CD4-positive, alpha-beta T cell (primary cell): ENCODE measurements at regions of chr17 and their contacts with region 1.

Region 1: DNA sequence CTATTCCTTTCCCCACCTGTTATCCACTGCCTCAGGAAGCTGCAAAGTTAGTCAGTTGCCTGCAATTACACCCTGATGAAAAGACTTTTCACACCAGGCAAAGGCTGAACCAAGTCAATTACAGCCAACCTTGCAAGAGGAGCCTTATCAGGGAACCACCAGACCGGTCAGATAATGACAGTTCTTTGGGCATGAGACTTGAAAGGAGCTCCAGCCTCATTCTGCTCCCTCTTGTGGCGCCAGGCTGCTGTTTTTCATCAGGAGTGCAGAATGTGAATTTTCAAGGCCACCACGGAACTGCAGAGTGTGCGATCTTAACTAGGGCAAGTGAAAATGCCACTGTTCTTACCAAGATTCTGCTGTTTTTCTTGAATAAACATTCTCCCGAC is 22.5 kb downstream of the DNAI2 start:
- DNase-seq: peak in 9 of 14 experiments; percentile 15 to 70 (median 32)
- ATAC-seq: no peak
- H3K4me3 ChIP-seq: no peak overlapping the region
- H3K4me3 Mint-ChIP-seq: no peak overlapping the region
- H3K27ac ChIP-seq: no peak overlapping the region
- H3K27ac Mint-ChIP-seq: no peak overlapping the region
- H3K4me1 ChIP-seq: peaks cover 19% of the 10 kb centered on the region
- H3K4me1 Mint-ChIP-seq: peaks cover 10% of the 10 kb centered on the region
- H3K27me3 ChIP-seq: no peaks in the 10 kb centered on the region
- H3K27me3 Mint-ChIP-seq: no peaks in the 10 kb centered on the region
- CTCF ChIP-seq: peak; percentile 50

Region 2: DNA sequence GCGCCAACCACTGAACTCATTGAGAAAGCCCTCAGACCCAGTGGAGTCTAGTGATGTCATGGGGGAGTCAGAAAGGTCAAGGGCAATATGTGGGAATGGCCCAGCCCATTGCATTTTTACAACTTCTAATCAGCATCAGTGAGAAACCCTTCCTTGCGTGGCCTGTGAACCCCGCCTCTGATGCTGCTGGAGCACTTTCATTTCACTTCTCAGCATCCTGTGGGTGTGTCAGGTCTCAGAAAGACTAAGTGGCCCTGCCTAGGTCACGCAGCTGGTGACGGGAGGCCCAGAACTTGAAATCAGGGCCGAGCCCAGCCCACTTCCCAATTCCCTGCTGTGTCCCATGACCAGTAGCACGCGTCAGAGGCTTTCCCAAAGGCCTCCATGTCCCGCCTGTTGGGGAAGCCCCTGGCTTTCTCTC is 16.4 kb before region 1 on chr17:
- CTCF ChIA-PET with region 1: interaction called, 8 read pairs
- POLR2A ChIA-PET with region 1: interaction called, 18 read pairs
- intact Hi-C with region 1: no loop called
- DNase-seq: peak; percentile 35 to 94 (median 54)
- ATAC-seq: peak; percentile 76
- H3K4me3 ChIP-seq: no peak overlapping the region
- H3K4me3 Mint-ChIP-seq: peak overlapping the region; percentile 12
- H3K27ac ChIP-seq: peak overlapping the region; percentile 57 to 90
- H3K27ac Mint-ChIP-seq: peak overlapping the region; percentile 90
- H3K4me1 ChIP-seq: peaks cover 73% of the 10 kb centered on the region
- H3K4me1 Mint-ChIP-seq: peaks cover 57% of the 10 kb centered on the region
- H3K27me3 ChIP-seq: no peaks in the 10 kb centered on the region
- H3K27me3 Mint-ChIP-seq: no peaks in the 10 kb centered on the region
- CTCF ChIP-seq: no peak

Region 3: GRCh38 chr17:74307984-74308773 is 11.6 kb after region 1 on chr17:
- CTCF ChIA-PET with region 1: no interaction called
- POLR2A ChIA-PET with region 1: no interaction called
- intact Hi-C with region 1: no loop called
- DNase-seq: no peak
- ATAC-seq: no peak
- H3K4me3 ChIP-seq: no peak overlapping the region
- H3K4me3 Mint-ChIP-seq: no peak overlapping the region
- H3K27ac ChIP-seq: no peak overlapping the region
- H3K27ac Mint-ChIP-seq: no peak overlapping the region
- H3K4me1 ChIP-seq: peaks cover 6% of the 10 kb centered on the region
- H3K4me1 Mint-ChIP-seq: peaks cover 6% of the 10 kb centered on the region
- H3K27me3 ChIP-seq: no peaks in the 10 kb centered on the region
- H3K27me3 Mint-ChIP-seq: no peaks in the 10 kb centered on the region
- CTCF ChIP-seq: no peak

Region 4: GRCh38 chr17:74417178-74418045 is 120.9 kb after region 1 on chr17:
- CTCF ChIA-PET with region 1: no interaction called
- POLR2A ChIA-PET with region 1: no interaction called
- intact Hi-C with region 1: no loop called
- DNase-seq: peak in 2 of 14 experiments; percentile 16 to 48
- ATAC-seq: no peak
- H3K4me3 ChIP-seq: no peak overlapping the region
- H3K4me3 Mint-ChIP-seq: no peak overlapping the region
- H3K27ac ChIP-seq: no peak overlapping the region
- H3K27ac Mint-ChIP-seq: no peak overlapping the region
- H3K4me1 ChIP-seq: no peaks in the 10 kb centered on the region
- H3K4me1 Mint-ChIP-seq: no peaks in the 10 kb centered on the region
- H3K27me3 ChIP-seq: peaks cover 0 to 2% of the 10 kb centered on the region in 2 experiments
- H3K27me3 Mint-ChIP-seq: peaks cover 15% of the 10 kb centered on the region
- CTCF ChIP-seq: no peak